ENCODE measurements at regions of chr6 and their contacts with region 1.

Region 1: GRCh38 chr6:52995913-52996645 is 995 bp upstream of the GSTA4 start:
- DNase-seq: peak in 1 of 4 experiments; percentile 79
- ATAC-seq: no peak
- H3K4me3 ChIP-seq: peak overlapping the region; percentile 28; the same call in 1 of the 2 replicates
- H3K27ac ChIP-seq: no peak overlapping the region
- H3K4me1 ChIP-seq: peaks cover 0 to 10% of the 10 kb centered on the region in 2 experiments; a peak in 3 of 5 replicates
- H3K27me3 ChIP-seq: no peaks in the 10 kb centered on the region
- CTCF ChIP-seq: no peak
- EP300 ChIP-seq: no peak
- POLR2A ChIP-seq: no peak
- RAD21 ChIP-seq: no peak

Region 2: GRCh38 chr6:52881996-52882841 is 113.9 kb before region 1 on chr6:
- CTCF ChIA-PET with region 1: interaction called, 3 read pairs
- POLR2A ChIA-PET with region 1: interaction called, 4 read pairs
- in situ Hi-C with region 1: no loop called
- intact Hi-C with region 1: loop called (anchors 5 kb)
- DNase-seq: peak; percentile 76 to 81 (median 78)
- ATAC-seq: peak; percentile 100
- H3K4me3 ChIP-seq: peak overlapping the region; percentile 41
- H3K27ac ChIP-seq: no peak overlapping the region; the same call in 2 of the 3 replicates
- H3K4me1 ChIP-seq: no peaks in the 10 kb centered on the region
- H3K27me3 ChIP-seq: peaks cover 4 to 5% of the 10 kb centered on the region in 2 experiments; a peak in 2 of 5 replicates
- CTCF ChIP-seq: peak; percentile 83 to 89 (median 83)
- EP300 ChIP-seq: no peak
- POLR2A ChIP-seq: no peak
- RAD21 ChIP-seq: peak; percentile 51 to 55

Region 3: GRCh38 chr6:53059648-53060589 is 63.8 kb after region 1 on chr6:
- CTCF ChIA-PET with region 1: no interaction called
- POLR2A ChIA-PET with region 1: no interaction called
- in situ Hi-C with region 1: loop called (anchors 5 kb)
- intact Hi-C with region 1: no loop called
- DNase-seq: no peak
- ATAC-seq: no peak
- H3K4me3 ChIP-seq: peak overlapping the region; percentile 78
- H3K27ac ChIP-seq: no peak overlapping the region
- H3K4me1 ChIP-seq: peaks cover 15 to 29% of the 10 kb centered on the region in 2 experiments; a peak in 4 of 5 replicates
- H3K27me3 ChIP-seq: no peaks in the 10 kb centered on the region
- CTCF ChIP-seq: no peak
- EP300 ChIP-seq: no peak
- POLR2A ChIP-seq: no peak
- RAD21 ChIP-seq: no peak

Region 4: DNA sequence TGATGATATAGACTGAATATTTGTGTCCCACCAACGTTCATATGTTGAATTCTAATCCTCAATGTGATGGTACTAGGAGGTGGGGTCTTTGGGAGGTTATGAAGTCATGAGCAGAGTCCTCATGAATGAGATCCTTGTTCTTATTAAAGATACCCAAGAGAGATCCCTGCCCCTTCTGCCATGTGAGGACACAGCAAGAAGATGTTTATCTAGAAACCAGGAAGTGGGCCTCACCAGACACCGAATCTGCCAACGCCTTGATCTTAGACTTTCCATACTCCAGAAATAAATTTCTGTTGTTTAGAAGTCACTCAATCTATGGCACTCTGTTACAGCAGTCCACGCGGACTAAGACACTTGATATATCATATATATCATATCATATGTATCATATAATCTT is 220.2 kb after region 1 on chr6:
- CTCF ChIA-PET with region 1: no interaction called
- POLR2A ChIA-PET with region 1: no interaction called
- in situ Hi-C with region 1: no loop called
- intact Hi-C with region 1: no loop called
- DNase-seq: no peak
- ATAC-seq: no peak
- H3K4me3 ChIP-seq: no peak overlapping the region
- H3K27ac ChIP-seq: no peak overlapping the region
- H3K4me1 ChIP-seq: no peaks in the 10 kb centered on the region; a peak in 1 of 5 replicates
- H3K27me3 ChIP-seq: no peaks in the 10 kb centered on the region
- CTCF ChIP-seq: no peak
- EP300 ChIP-seq: no peak
- POLR2A ChIP-seq: no peak
- RAD21 ChIP-seq: no peak

Region 5: DNA sequence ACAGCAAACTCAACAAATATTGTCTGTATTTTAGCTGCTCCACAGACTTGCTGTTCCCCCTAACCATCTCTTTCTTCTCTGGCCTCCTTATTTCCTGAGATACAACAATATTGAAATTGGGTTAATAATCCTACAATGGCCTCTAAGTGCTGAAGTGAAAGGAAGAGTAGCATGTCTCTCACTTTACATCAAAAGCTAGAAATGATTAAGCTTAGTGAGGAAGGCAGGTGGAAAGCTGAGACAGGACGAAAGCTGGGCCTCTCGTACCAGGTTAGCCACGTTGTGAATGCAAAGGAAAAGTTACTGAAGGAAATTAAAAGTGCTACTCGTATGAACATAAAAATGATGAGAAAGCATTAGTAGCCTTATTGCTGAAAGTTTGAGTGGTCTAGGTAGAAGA is 288.8 kb after region 1 on chr6:
- CTCF ChIA-PET with region 1: no interaction called
- POLR2A ChIA-PET with region 1: no interaction called
- in situ Hi-C with region 1: no loop called
- intact Hi-C with region 1: no loop called
- DNase-seq: no peak
- ATAC-seq: no peak
- H3K4me3 ChIP-seq: no peak overlapping the region
- H3K27ac ChIP-seq: no peak overlapping the region
- H3K4me1 ChIP-seq: no peaks in the 10 kb centered on the region
- H3K27me3 ChIP-seq: no peaks in the 10 kb centered on the region
- CTCF ChIP-seq: no peak
- EP300 ChIP-seq: no peak
- POLR2A ChIP-seq: no peak
- RAD21 ChIP-seq: no peak

Measured in K562 (cell line).